ENCODE measurements at regions of chr3 and their contacts with region 1.

Region 1: GRCh38 chr3:59575113-59576001 is 525.5 kb upstream of the CFAP20DC start:
- DNase-seq: peak; percentile 86
- ATAC-seq: peak; percentile 85 to 87
- H3K4me3 ChIP-seq: no peak overlapping the region
- H3K27ac ChIP-seq: no peak overlapping the region
- H3K4me1 ChIP-seq: no peaks in the 10 kb centered on the region
- H3K27me3 ChIP-seq: no peaks in the 10 kb centered on the region
- CTCF ChIP-seq: peak; percentile 97

Region 2: DNA sequence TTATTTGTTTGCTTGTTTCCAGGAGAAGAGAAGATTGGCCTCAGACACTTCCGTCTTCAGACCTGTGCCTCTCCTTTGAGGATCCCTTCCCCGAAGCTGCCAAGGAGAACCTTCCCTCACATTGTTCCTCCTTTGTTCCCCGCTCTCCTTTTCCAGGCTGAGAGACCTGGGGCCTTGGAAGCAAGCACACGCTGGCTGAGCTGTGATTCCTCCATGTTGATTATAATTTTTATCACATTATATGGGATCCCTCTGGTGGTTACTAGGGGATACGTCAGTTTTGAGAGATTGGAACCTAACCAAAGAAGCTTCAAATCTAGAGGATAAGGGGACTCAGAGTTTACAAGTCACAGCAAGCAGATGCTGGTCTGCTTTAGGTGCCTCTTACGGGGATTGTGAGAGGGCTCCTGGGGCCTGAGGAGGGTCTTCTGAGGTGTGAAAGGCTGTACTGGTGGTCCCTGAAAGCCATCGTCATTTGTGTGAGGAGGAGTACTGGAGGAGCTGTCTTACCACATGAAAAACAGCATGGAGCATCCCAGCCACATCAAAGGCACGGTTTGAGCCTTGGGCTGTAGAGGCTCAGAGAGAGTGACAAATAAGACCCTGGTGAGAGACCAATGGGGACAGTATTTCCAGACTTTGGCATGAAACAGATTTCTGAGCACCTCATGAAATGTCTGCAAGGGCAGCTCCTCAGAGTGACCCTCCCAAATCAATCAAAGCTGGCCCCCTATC is 234.5 kb after region 1 on chr3:
- intact Hi-C with region 1: loop called (anchors 10 kb)
- DNase-seq: no peak
- ATAC-seq: peak; percentile 43 to 45
- H3K4me3 ChIP-seq: no peak overlapping the region
- H3K27ac ChIP-seq: no peak overlapping the region
- H3K4me1 ChIP-seq: peaks cover 7% of the 10 kb centered on the region
- H3K27me3 ChIP-seq: no peaks in the 10 kb centered on the region
- CTCF ChIP-seq: peak; percentile 39

Region 3: GRCh38 chr3:59857589-59858346 is 282.4 kb after region 1 on chr3:
- intact Hi-C with region 1: loop called (anchors 10 kb)
- DNase-seq: peak; percentile 82
- ATAC-seq: peak; percentile 93 to 98
- H3K4me3 ChIP-seq: no peak overlapping the region
- H3K27ac ChIP-seq: no peak overlapping the region
- H3K4me1 ChIP-seq: no peaks in the 10 kb centered on the region
- H3K27me3 ChIP-seq: no peaks in the 10 kb centered on the region
- CTCF ChIP-seq: peak; percentile 88